ENCODE measurements at regions of chr2 and their contacts with region 1.

Region 1: GRCh38 chr2:220855296-220855695 is 716.8 kb downstream of the EPHA4 start:
- DNase-seq: no peak
- H3K4me3 ChIP-seq: no peak overlapping the region
- CTCF ChIP-seq: no peak
- POLR2A ChIP-seq: no peak

Region 2: GRCh38 chr2:222526480-222527277 is 1671.4 kb after region 1 on chr2:
- intact Hi-C with region 1: loop called (anchors 5 kb)
- DNase-seq: no peak
- H3K4me3 ChIP-seq: no peak overlapping the region
- CTCF ChIP-seq: no peak
- POLR2A ChIP-seq: no peak